ENCODE measurements at regions of chr1 and their contacts with region 1.

Region 1: GRCh38 chr1:27940297-27940696 is 5.5 kb downstream of the SMPDL3B start:
- DNase-seq: peak; percentile 91
- H3K4me3 Mint-ChIP-seq: no peak overlapping the region
- H3K27ac Mint-ChIP-seq: peak overlapping the region; percentile 70
- H3K4me1 Mint-ChIP-seq: peaks cover 38% of the 10 kb centered on the region
- H3K27me3 Mint-ChIP-seq: peaks cover 8% of the 10 kb centered on the region

Region 2: DNA sequence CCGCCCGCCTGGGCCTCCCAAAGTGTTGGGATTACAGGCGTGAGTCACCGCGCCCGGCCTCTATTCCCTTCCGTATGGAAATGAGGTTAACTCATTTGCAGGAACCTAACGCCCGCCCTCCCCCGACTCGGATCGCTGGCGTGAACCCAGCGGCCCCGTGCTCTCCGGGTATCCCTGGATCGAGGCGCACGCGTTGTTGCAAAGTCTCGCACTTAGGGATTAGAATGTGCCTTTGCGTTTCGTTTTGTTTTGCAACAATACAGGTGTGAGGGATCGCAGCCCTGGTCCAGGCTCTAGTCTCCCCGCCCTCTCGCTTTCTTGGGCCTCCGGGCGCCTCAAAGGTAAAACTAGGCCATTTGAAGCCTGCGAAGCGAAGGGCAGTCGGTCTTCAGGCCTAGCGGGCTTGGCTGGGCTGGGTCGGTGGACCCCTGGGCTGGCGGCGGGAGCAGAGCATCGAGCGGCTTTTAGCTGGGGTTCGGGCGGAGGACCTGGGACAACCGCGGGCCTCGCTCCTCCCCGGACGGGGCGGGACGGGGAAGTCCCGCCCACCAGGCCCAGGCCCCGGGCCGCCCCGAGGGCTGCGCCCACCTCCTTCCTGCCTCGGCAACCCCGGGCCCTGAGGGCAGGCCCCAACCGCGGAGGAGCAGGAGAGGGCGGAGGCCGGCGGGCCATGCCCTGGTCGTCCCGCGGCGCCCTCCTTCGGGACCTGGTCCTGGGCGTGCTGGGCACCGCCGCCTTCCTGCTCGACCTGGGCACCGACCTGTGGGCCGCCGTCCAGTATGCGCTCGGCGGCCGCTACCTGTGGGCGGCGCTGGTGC is 19.3 kb after region 1 on chr1 and contains the start of gene XKR8:
- intact Hi-C with region 1: loop called (anchors 2 kb)
- DNase-seq: peak; percentile 95
- H3K4me3 Mint-ChIP-seq: peak within 1 kb of the TSS; percentile 86
- H3K27ac Mint-ChIP-seq: peak within 1 kb of the TSS; percentile 74
- H3K4me1 Mint-ChIP-seq: peaks cover 13% of the 10 kb centered on the region
- H3K27me3 Mint-ChIP-seq: peaks cover 2% of the 10 kb centered on the region
- total RNA-seq, gene XKR8: 4.1 and 7.0 TPM in 2 replicates

Region 3: GRCh38 chr1:27979151-27979858 is 39.0 kb after region 1 on chr1:
- intact Hi-C with region 1: loop called (anchors 5 kb)
- DNase-seq: peak; percentile 72
- H3K4me3 Mint-ChIP-seq: no peak overlapping the region
- H3K27ac Mint-ChIP-seq: no peak overlapping the region
- H3K4me1 Mint-ChIP-seq: no peaks in the 10 kb centered on the region
- H3K27me3 Mint-ChIP-seq: no peaks in the 10 kb centered on the region

Measured in activated CD4-positive, alpha-beta T cell treated with anti-CD3 and anti-CD28 coated beads, Interleukin-2, amount 10 ng/mL, durations not matched to agents 24 days and 14 days (primary cell).